ENCODE measurements at regions of chr20 and their contacts with region 1.

Region 1: GRCh38 chr20:60749804-60750602 is 502.1 kb upstream of the CDH4 start:
- DNase-seq: no peak

Region 2: GRCh38 chr20:60732322-60732721 is 17.7 kb before region 1 on chr20:
- intact Hi-C with region 1: loop called in 1 of 2 experiments (anchors 1 kb)
- DNase-seq: no peak

Region 3: GRCh38 chr20:61896058-61896961 is 1146.3 kb after region 1 on chr20:
- intact Hi-C with region 1: no loop called
- DNase-seq: no peak